ENCODE measurements at regions of chr4 and their contacts with region 1.

Region 1: GRCh38 chr4:140861359-140862176 is 105.4 kb upstream of the TBC1D9 start:
- DNase-seq: peak; percentile 55
- H3K4me3 Mint-ChIP-seq: no peak overlapping the region
- H3K27ac Mint-ChIP-seq: no peak overlapping the region
- H3K4me1 Mint-ChIP-seq: no peaks in the 10 kb centered on the region
- H3K27me3 Mint-ChIP-seq: peaks cover 38% of the 10 kb centered on the region
- CTCF ChIP-seq: peak; percentile 25

Region 2: GRCh38 chr4:139815778-139816601 is 1045.6 kb before region 1 on chr4:
- CTCF ChIA-PET with region 1: no interaction called
- intact Hi-C with region 1: no loop called
- DNase-seq: no peak
- H3K4me3 Mint-ChIP-seq: no peak overlapping the region
- H3K27ac Mint-ChIP-seq: no peak overlapping the region
- H3K4me1 Mint-ChIP-seq: no peaks in the 10 kb centered on the region
- H3K27me3 Mint-ChIP-seq: no peaks in the 10 kb centered on the region
- CTCF ChIP-seq: no peak

Region 3: GRCh38 chr4:140609548-140610425 is 251.8 kb before region 1 on chr4:
- CTCF ChIA-PET with region 1: no interaction called
- intact Hi-C with region 1: loop called (anchors 5 kb)
- DNase-seq: peak; percentile 1
- H3K4me3 Mint-ChIP-seq: no peak overlapping the region
- H3K27ac Mint-ChIP-seq: no peak overlapping the region
- H3K4me1 Mint-ChIP-seq: no peaks in the 10 kb centered on the region
- H3K27me3 Mint-ChIP-seq: no peaks in the 10 kb centered on the region
- CTCF ChIP-seq: no peak

Region 4: DNA sequence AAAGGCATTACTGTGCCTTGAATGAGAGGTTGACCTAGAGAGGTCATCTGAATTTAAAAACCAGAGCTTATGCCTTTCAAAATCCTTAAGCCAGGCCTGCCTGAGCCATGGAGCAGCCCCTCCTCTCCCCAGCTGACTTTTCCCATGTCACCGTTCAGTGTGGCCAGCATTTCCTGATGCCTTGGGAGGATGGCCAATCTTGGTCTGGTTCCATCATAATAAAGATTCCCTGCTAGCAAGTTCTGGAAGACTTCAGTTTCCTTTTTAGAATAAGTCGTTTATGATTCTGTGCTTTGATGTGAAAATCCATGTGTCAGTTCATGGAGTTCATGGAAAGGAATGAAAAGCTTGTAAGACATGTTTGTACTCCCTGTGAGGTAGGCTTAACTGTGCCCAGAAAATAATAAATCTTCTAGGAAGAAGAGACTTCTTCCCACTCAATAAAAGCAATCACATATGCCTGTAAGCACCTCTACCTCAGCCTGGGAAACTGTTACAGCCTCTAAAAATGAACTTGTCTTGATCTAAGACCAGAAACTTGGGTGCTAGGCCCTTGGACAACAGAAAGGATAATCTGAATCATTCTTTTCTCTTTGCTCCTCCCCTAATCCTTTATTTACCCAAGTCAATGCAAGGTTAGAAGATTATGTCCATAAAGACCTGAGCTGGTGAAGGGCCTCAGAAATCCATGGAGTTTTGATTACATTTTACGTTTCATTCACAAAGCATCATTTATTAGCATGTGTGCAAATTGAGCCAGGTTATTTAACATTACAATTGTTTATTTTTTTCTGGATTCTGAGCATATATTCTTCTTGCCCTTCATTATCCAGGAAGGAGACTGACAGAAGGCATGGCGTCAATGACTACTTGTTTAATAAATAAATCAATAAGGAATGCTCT is 21.4 kb before region 1 on chr4:
- CTCF ChIA-PET with region 1: no interaction called
- intact Hi-C with region 1: no loop called
- DNase-seq: no peak
- H3K4me3 Mint-ChIP-seq: no peak overlapping the region
- H3K27ac Mint-ChIP-seq: no peak overlapping the region
- H3K4me1 Mint-ChIP-seq: no peaks in the 10 kb centered on the region
- H3K27me3 Mint-ChIP-seq: peaks cover 19% of the 10 kb centered on the region
- CTCF ChIP-seq: no peak

Region 5: DNA sequence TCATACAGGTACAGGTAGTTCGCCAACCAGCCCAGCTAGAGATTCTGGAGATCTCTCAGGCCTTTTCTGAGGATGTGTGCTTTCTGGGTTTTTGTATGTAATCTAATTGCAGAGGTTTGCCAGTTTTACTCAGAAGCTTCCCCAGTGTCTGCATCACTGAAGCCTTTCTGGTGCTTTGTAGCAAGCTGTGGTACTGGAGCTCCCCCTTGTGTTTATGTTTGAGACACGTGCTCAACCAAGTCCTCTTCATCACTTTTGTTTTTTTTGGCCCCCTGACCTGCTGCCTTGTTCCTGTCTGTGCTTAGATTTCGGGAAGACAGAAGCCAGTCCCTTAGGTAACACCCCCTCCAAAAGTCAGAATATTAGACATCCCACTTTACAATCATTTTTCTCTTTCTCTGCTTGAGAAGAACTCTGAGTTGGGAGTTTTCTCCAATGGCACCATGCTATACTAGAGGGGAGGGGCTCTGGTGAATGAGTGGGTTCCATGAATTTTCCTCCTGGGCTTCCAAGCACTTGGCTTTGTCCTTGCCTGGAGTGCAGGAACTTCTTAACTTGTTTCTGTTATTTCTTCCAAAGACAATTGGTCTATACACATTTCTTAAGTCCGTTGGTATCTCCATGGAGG is 23.0 kb after region 1 on chr4:
- CTCF ChIA-PET with region 1: interaction called, 4 read pairs
- intact Hi-C with region 1: loop called (anchors 1 kb)
- DNase-seq: peak; percentile 60
- H3K4me3 Mint-ChIP-seq: no peak overlapping the region
- H3K27ac Mint-ChIP-seq: no peak overlapping the region
- H3K4me1 Mint-ChIP-seq: no peaks in the 10 kb centered on the region
- H3K27me3 Mint-ChIP-seq: peaks cover 17% of the 10 kb centered on the region
- CTCF ChIP-seq: peak; percentile 64

Region 6: GRCh38 chr4:141133146-141133998 is 271.8 kb after region 1 on chr4 and contains the start of gene RNF150:
- CTCF ChIA-PET with region 1: no interaction called
- intact Hi-C with region 1: loop called (anchors 1 kb)
- DNase-seq: peak; percentile 65
- H3K4me3 Mint-ChIP-seq: peak within 1 kb of the TSS; percentile 97
- H3K27ac Mint-ChIP-seq: no peak within 1 kb of the TSS
- H3K4me1 Mint-ChIP-seq: no peaks in the 10 kb centered on the region
- H3K27me3 Mint-ChIP-seq: peaks cover 80% of the 10 kb centered on the region
- CTCF ChIP-seq: no peak
- total RNA-seq, gene RNF150: 0.14 and 0.17 TPM in 2 replicates